Spleen (tissue), 13 donors: ENCODE measurements at regions of chr10 and their contacts with region 1.

Region 1: DNA sequence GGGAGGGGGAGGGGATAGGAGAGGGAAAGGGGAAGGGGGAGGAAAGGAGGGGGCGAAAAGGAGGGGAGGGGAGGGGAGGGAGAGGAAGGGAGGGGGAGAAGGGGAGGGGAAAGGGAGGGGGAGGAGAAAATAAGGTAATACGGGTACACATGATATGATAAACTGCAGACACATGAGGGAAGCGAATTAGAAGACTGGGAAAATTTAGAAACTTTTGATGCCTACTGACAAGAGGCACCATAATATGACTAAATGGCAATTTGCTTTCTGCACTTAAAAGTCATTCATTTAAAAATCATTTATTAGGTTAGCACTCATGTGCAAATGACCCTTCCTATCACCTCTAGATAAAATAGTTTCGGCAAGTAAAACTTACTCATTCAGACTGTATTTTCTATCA is 73.6 kb downstream of the ARHGAP12 start:
- DNase-seq: no peak
- H3K4me3 ChIP-seq: no peak overlapping the region
- H3K27ac ChIP-seq: no peak overlapping the region
- H3K4me1 ChIP-seq: peaks cover 0 to 16% (median 3%) of the 10 kb centered on the region in 6 donors
- H3K27me3 ChIP-seq: no peaks in the 10 kb centered on the region
- CTCF ChIP-seq: no peak
- POLR2A ChIP-seq: no peak

Region 2: DNA sequence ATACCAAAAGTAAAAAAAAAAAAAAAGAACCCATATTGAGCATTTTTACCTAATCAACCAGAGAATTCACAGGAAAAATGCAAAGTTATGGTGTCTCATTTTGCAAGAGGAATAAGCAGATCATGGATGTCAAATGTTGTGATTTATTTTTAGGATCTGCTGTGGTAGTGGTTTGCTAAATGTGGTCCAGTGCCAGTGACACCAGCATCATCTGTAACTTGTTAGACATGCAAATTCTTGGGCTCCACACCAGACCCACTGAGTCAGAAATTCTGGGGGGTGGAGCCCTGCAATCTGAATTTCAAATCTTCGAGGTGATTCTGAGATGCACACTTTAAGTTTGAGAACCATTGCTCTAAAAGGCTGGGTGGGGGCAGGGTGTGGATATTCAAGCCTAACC is 566.1 kb before region 1 on chr10:
- intact Hi-C with region 1: no loop called
- DNase-seq: no peak
- H3K4me3 ChIP-seq: no peak overlapping the region
- H3K27ac ChIP-seq: no peak overlapping the region
- H3K4me1 ChIP-seq: no peaks in the 10 kb centered on the region
- H3K27me3 ChIP-seq: no peaks in the 10 kb centered on the region
- CTCF ChIP-seq: no peak
- POLR2A ChIP-seq: no peak

Region 3: GRCh38 chr10:32005050-32005449 is 150.0 kb after region 1 on chr10:
- intact Hi-C with region 1: loop called (anchors 5 kb)
- DNase-seq: no peak
- H3K4me3 ChIP-seq: no peak overlapping the region
- H3K27ac ChIP-seq: peak overlapping the region in 4 of 8 donors; percentile 53 to 71 (median 66)
- H3K4me1 ChIP-seq: peaks cover 0 to 32% (median 15%) of the 10 kb centered on the region in 6 donors
- H3K27me3 ChIP-seq: no peaks in the 10 kb centered on the region
- CTCF ChIP-seq: peak; percentile 13 to 60 (median 49)
- POLR2A ChIP-seq: no peak